Colonic mucosa (tissue), 4 donors: ENCODE measurements at regions of chr3 and their contacts with region 1.

Region 1: DNA sequence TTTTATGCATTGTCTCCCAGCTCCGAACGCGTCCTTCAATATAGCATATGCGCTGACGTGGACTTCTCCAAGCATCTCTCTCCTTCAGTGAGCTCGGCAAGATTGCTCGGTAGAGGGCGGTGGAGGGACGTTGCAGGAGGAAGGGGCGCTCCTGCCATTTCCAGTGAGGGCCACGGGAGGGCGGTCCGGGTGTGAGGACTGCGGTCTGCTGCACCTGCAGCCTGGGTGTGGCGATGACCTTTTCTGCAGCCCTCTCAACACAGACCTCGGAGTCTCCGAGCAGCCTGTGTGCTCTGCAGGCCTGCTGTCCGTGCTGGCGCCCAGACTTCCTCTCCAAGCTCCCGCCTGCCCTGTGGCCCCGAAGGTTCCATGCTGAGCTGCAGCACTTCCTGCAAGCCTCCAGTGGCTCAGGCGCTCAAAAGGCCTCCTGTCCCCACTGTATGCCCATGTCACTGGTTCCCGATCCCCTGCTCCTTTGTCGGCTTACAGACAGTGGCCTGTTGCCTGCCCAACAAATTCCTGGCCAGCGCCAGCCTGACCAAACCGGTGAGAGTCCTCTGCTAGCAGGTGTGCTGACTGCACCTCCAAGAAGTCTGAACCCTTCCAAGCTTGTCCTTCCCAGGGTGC is 8.9 kb upstream of the RTP3 start:
- DNase-seq: peak; percentile 97
- H3K4me3 ChIP-seq: no peak overlapping the region
- H3K27ac ChIP-seq: no peak overlapping the region
- H3K4me1 ChIP-seq: no peaks in the 10 kb centered on the region
- H3K27me3 ChIP-seq: no peaks in the 10 kb centered on the region
- CTCF ChIP-seq: peak; percentile 97

Region 2: GRCh38 chr3:46558184-46559043 is 69.6 kb after region 1 on chr3:
- intact Hi-C with region 1: loop called (anchors 5 kb)
- DNase-seq: peak; percentile 87
- H3K4me3 ChIP-seq: peak overlapping the region; percentile 27
- H3K27ac ChIP-seq: peak overlapping the region; percentile 48
- H3K4me1 ChIP-seq: no peaks in the 10 kb centered on the region
- H3K27me3 ChIP-seq: no peaks in the 10 kb centered on the region
- CTCF ChIP-seq: peak; percentile 54

Region 3: DNA sequence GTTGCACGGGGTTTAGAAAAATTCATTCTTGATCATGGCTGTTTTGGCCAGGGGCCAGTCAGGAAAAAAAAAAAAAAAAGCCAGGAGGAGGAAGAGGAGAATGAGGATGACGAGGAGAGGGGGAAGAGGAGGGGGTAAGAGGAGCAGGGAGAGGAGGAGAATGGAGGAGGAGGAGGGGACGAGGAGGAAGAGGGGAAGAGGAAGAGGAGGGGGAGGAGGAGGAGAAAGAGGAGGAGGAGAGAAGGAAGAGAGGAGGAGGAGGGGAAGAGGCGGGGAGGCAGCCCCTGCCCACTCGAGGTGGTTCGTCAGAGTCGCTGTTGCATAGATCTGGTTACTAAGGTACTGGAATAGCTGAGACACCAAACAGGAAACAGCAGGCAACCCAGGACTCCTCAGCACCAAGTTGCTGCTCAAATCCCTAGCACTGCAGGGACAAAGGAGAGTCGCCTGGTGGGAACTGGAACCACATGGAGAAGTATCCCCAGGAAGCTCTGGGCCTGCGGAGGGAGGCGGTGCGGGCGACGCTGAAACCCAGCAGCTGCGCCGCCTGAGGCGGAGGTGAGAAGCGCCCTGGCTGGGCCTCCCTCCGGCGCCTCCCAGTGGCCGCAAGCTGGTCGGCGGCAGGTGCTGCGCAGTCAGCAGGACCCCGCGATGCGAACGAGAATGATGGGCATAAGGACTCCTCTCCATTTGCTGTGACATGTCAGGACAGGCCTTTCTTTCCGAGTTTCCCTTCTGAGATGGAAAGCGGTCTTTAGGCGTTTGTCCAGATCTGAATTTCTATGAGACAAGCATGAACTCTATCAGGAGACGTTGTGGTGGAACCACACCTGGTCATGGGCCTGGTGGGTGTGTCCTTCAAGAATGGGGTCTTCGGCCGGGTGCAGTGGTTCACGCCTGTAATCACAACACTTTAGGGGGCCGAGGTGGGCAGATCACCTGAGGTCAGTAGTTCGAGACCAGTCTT is 141.0 kb after region 1 on chr3:
- intact Hi-C with region 1: loop called (anchors 2 kb)
- DNase-seq: peak; percentile 79
- H3K4me3 ChIP-seq: no peak overlapping the region
- H3K27ac ChIP-seq: peak overlapping the region; percentile 60
- H3K4me1 ChIP-seq: peaks cover 3% of the 10 kb centered on the region
- H3K27me3 ChIP-seq: no peaks in the 10 kb centered on the region
- CTCF ChIP-seq: peak; percentile 96